ENCODE measurements at regions of chr18 and their contacts with region 1.

Region 1: DNA sequence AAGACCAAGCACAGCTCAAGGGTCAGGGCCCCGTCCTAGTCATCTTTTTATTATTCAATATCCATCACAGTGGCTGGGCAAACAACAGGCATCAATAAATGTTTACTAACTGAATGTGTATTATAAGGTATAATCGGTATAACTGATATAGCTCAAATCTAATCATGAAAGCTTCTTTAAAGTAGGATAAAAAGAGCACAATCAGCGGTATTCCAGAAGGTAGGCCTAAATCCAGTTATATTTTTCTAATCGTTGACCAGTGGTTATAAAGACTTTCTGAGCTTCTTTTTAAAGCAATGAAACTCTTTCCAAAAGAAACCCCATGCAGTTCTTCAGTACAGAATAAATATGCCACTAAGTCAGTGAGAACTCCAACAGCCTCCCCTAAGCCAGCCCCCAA is 92.1 kb downstream of the SMAD2 start:
- H3K4me3 Mint-ChIP-seq: no peak overlapping the region
- H3K27ac Mint-ChIP-seq: no peak overlapping the region
- H3K4me1 Mint-ChIP-seq: no peaks in the 10 kb centered on the region
- H3K27me3 Mint-ChIP-seq: no peaks in the 10 kb centered on the region

Region 2: DNA sequence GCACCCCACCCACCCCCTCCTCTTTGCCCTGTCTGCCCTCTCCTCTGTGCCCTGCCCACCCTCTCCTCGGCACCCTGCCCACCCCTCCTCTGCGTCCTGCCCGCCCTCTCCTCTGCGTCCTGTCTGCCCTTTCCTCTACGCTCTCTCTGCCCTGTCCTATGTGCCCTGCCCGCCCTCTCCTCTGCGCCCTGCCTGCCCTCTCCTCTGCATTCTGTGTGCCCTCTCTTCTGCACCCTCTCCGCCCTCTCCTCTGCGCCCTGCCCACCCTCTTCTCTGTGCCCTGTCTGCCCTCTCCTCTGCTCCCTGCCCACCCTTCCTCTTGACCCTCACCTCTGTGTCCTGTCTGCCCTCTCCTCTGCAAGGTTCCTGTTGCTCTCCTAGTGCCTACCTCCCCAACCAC is 141.5 kb before region 1 on chr18:
- intact Hi-C with region 1: no loop called
- H3K4me3 Mint-ChIP-seq: no peak overlapping the region
- H3K27ac Mint-ChIP-seq: no peak overlapping the region
- H3K4me1 Mint-ChIP-seq: no peaks in the 10 kb centered on the region
- H3K27me3 Mint-ChIP-seq: peaks cover 3% of the 10 kb centered on the region

Region 3: GRCh38 chr18:47737956-47738355 is 100.4 kb before region 1 on chr18:
- intact Hi-C with region 1: no loop called
- H3K4me3 Mint-ChIP-seq: no peak overlapping the region
- H3K27ac Mint-ChIP-seq: no peak overlapping the region
- H3K4me1 Mint-ChIP-seq: no peaks in the 10 kb centered on the region
- H3K27me3 Mint-ChIP-seq: peaks cover 18% of the 10 kb centered on the region

Region 4: DNA sequence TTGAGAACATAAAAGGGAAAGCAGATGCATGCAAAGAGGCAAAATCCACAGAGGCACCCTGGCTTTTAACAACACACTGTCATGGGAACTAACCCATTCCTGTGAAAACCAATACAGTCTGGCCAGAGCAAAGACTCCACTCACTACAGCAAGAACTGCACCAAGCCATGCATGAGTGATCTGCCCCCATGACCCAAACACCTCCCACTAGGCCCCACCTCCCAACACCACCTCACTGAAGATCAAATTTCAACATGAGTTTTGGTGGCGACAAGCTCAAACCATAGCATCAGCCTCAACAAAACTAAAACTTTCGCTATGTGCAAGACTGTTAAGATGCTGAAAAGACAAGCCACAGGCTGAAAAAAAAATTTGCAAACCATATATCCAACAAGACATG is 70.7 kb before region 1 on chr18:
- intact Hi-C with region 1: no loop called
- H3K4me3 Mint-ChIP-seq: no peak overlapping the region
- H3K27ac Mint-ChIP-seq: no peak overlapping the region
- H3K4me1 Mint-ChIP-seq: no peaks in the 10 kb centered on the region
- H3K27me3 Mint-ChIP-seq: peaks cover 20% of the 10 kb centered on the region

Region 5: DNA sequence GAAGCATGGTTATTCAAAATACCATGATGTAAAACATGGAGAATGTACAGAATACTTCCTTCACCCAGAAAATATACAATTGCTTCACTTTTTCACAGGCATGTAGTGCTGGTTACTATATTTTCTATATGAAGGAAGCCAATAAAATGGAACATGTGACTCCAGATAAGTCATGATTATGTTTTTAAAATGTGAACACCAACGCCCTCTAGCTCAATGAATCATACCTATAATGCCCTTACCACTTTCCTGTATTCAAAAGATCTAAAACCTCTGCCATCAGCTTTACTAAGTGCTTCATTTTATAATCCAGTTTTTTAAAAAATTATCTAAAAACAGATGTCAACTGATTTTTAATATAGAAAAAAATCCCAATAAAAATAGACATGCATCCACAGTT is 32.2 kb after region 1 on chr18:
- intact Hi-C with region 1: loop called (anchors 5 kb)
- H3K4me3 Mint-ChIP-seq: no peak overlapping the region
- H3K27ac Mint-ChIP-seq: no peak overlapping the region
- H3K4me1 Mint-ChIP-seq: peaks cover 5% of the 10 kb centered on the region
- H3K27me3 Mint-ChIP-seq: no peaks in the 10 kb centered on the region

Measured in dendritic cell treated with granulocyte-macrophage colony-stimulating factor and Interleukin-4, amounts not matched to agents 40 ng/mL and 50 ng/mL, for 4 days (primary cell).